Vagina (tissue), 2 donors: ENCODE measurements at regions of chr9 and their contacts with region 1.

Region 1: GRCh38 chr9:127336738-127337251 is 60.2 kb upstream of the SLC2A8 start:
- DNase-seq: peak in 1 of 2 donors; percentile 94
- H3K4me3 ChIP-seq: no peak overlapping the region
- H3K27ac ChIP-seq: peak overlapping the region; percentile 90
- H3K4me1 ChIP-seq: peaks cover 67% of the 10 kb centered on the region
- H3K27me3 ChIP-seq: no peaks in the 10 kb centered on the region
- CTCF ChIP-seq: no peak
- POLR2A ChIP-seq: no peak

Region 2: DNA sequence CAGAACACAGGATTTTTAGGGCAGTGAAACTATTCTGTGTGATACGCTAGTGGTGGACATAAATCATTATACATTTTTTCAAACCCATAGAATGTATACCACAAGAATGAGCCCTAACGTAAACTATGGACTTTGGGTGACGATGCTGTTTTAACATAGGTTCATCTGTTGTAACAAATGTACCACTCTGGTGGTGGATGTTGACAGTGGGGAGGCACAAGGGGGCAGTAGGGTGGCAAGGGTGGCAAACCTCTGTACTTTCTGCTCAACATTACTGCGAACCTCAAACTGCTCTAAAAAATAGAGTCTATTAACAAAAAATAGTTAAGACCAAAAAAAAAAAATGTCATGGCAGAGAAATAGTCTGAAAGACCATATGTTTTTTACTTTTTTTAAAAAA is 1019.3 kb before region 1 on chr9:
- intact Hi-C with region 1: no loop called
- DNase-seq: no peak
- H3K4me3 ChIP-seq: no peak overlapping the region
- H3K27ac ChIP-seq: no peak overlapping the region
- H3K4me1 ChIP-seq: no peaks in the 10 kb centered on the region
- H3K27me3 ChIP-seq: no peaks in the 10 kb centered on the region
- CTCF ChIP-seq: peak in 1 of 3 experiments; percentile 25
- POLR2A ChIP-seq: no peak

Region 3: GRCh38 chr9:127224178-127224882 is 112.5 kb before region 1 on chr9:
- intact Hi-C with region 1: loop called (anchors 10 kb)
- DNase-seq: peak in 1 of 2 donors; percentile 96
- H3K4me3 ChIP-seq: peak overlapping the region; percentile 76 to 78
- H3K27ac ChIP-seq: peak overlapping the region; percentile 78
- H3K4me1 ChIP-seq: peaks cover 19% of the 10 kb centered on the region
- H3K27me3 ChIP-seq: no peaks in the 10 kb centered on the region
- CTCF ChIP-seq: no peak
- POLR2A ChIP-seq: no peak